ENCODE measurements at regions of chr5 and their contacts with region 1.

Region 1: GRCh38 chr5:136409000-136409399 is 43.7 kb upstream of the TRPC7 start:
- DNase-seq: no peak
- ATAC-seq: no peak
- H3K4me3 ChIP-seq: no peak overlapping the region
- H3K27ac ChIP-seq: no peak overlapping the region
- H3K4me1 ChIP-seq: no peaks in the 10 kb centered on the region
- H3K27me3 ChIP-seq: no peaks in the 10 kb centered on the region
- CTCF ChIP-seq: no peak

Region 2: DNA sequence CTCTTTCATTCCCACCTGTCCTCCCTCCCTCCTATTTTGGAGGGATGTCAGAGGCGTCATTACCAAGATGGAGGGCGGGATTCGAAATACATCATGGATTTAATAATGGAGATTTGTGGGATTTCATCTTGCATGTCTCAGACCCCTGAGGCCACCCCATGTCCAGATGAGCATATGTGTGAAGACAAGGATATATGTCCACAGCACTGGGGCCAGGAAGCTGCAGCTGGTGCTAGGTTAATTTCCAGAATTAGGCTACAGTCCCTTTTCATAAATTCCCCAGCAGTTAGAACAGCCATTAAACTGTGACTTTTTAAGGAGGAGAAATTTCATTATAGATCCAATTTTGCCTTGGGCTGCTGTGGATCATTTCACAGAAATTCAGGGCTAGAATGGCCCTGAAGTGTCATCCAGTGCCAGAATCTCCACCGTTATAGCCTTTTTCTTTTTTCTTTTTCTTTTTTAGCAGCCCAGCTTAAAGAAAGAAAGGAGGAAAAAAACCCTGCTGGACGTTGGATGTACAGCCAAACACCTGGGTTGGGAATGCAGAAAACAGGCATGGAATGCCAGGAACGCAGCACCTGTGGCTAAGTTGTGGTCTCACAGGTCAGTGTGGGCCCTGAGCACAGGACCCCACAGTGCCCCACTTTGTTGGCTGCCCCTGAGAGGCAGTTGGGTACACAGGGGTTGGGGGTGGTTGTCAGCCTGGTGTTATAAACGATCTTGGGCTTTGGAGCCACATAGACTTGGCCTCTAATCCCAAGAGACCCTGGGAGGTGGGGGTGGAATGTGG is 780.0 kb before region 1 on chr5:
- CTCF ChIA-PET with region 1: no interaction called
- POLR2A ChIA-PET with region 1: no interaction called
- in situ Hi-C with region 1: no loop called
- intact Hi-C with region 1: no loop called
- DNase-seq: no peak
- ATAC-seq: no peak
- H3K4me3 ChIP-seq: no peak overlapping the region
- H3K27ac ChIP-seq: no peak overlapping the region
- H3K4me1 ChIP-seq: no peaks in the 10 kb centered on the region
- H3K27me3 ChIP-seq: no peaks in the 10 kb centered on the region
- CTCF ChIP-seq: no peak

Region 3: DNA sequence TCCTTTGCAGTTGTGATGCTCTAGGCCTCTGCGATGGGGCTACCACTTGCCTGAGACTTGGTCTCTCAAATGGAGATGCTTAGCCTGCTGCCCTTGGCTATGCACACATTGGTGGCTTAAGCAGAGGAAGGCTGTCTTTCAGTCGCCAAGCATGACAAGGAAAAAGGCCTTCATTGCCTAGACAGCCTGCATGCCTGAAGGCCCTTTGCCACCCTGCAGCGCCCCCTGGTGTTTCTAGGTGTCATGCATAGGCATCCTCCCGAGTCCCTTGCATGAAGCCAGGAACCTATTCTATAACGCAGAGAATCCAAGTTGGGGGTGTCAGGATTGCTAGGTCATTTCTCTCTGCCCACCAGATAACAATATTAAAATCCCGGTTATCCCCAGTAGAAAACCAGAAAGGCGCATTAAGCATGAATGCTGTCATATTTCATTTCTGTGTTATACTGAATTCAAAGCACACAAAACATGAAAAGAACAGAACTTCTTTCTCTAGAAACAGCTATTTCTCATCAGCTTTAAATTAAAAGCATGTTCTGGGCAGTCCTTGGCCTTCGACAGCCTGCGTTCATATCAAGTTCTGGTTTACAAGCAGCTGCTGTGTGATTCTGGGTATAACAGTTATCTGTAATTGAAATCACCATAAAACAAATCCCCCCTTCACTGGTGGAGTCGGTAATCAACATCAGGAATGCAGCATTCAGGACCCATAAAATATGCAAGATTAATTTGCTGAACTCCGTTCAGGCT is 16.0 kb after region 1 on chr5:
- CTCF ChIA-PET with region 1: no interaction called
- POLR2A ChIA-PET with region 1: no interaction called
- in situ Hi-C with region 1: no loop called
- intact Hi-C with region 1: no loop called
- DNase-seq: peak; percentile 25
- ATAC-seq: peak; percentile 87
- H3K4me3 ChIP-seq: no peak overlapping the region
- H3K27ac ChIP-seq: no peak overlapping the region
- H3K4me1 ChIP-seq: no peaks in the 10 kb centered on the region
- H3K27me3 ChIP-seq: no peaks in the 10 kb centered on the region
- CTCF ChIP-seq: peak; percentile 85

Region 4: DNA sequence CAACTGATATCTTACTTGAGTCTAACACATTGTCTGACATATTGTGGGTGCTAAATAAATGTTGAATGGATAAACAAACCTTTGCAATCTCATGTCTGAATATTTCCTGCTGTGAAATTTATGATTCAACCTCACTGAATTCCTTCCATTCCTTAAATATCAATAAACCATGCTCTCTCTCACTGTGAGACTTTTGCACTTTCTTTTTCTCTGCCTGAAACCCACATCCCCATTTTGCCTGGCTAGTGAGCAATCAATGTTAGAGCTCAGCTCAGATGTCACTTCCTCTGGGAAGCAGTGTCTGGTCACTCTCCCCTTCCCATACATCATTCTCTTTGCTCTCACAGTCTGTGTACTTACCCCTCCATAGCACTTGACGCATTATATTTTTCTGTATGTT is 340.0 kb after region 1 on chr5:
- CTCF ChIA-PET with region 1: no interaction called
- POLR2A ChIA-PET with region 1: interaction called, 10 read pairs
- in situ Hi-C with region 1: no loop called
- intact Hi-C with region 1: no loop called
- DNase-seq: no peak
- ATAC-seq: no peak
- H3K4me3 ChIP-seq: no peak overlapping the region
- H3K27ac ChIP-seq: no peak overlapping the region
- H3K4me1 ChIP-seq: no peaks in the 10 kb centered on the region
- H3K27me3 ChIP-seq: no peaks in the 10 kb centered on the region
- CTCF ChIP-seq: no peak

Region 5: DNA sequence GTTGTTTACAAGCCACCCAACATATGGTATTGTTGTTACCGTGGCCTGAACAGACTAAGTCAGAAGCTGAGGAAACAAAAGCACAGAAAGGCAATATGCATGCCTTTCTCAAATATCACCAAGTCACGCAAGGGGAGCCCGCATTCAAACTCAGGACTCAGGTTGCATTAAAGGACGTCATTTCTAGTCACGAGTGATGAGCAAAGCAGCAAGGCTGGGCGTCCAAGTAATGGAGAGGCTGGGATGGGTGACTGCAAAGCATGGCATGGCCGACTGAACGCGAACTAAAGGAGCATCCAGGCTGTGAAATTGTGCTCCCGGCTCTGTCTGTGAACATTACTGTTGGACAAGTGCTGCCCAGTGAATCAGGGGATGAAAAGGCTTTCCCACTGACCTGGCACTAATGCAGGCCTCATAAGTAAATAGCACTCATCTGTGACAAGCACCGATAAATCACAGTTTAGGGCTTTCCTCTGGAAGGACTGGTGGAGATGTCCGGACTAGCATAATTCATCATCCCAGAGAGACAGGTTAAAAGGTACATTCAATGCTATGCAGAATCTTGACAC is 887.3 kb after region 1 on chr5:
- CTCF ChIA-PET with region 1: no interaction called
- POLR2A ChIA-PET with region 1: no interaction called
- in situ Hi-C with region 1: no loop called
- intact Hi-C with region 1: loop called (anchors 10 kb)
- DNase-seq: no peak
- ATAC-seq: no peak
- H3K4me3 ChIP-seq: no peak overlapping the region
- H3K27ac ChIP-seq: no peak overlapping the region
- H3K4me1 ChIP-seq: no peaks in the 10 kb centered on the region
- H3K27me3 ChIP-seq: peaks cover 8% of the 10 kb centered on the region
- CTCF ChIP-seq: no peak